GM12878 (cell line): ENCODE measurements at regions of chr15 and their contacts with region 1.

Region 1: GRCh38 chr15:89740137-89740536 is 10.9 kb downstream of the MESP1 start:
- DNase-seq: peak; percentile 43
- ATAC-seq: peak; percentile 98
- H3K4me3 ChIP-seq: no peak overlapping the region
- H3K27ac ChIP-seq: no peak overlapping the region
- H3K4me1 ChIP-seq: no peaks in the 10 kb centered on the region
- H3K27me3 ChIP-seq: no peaks in the 10 kb centered on the region
- CTCF ChIP-seq: peak; percentile 86 to 91 (median 91); a peak in 5 of 6 replicates
- EP300 ChIP-seq: no peak
- POLR2A ChIP-seq: no peak
- RAD21 ChIP-seq: peak; percentile 82

Region 2: GRCh38 chr15:89556413-89557262 is 183.5 kb before region 1 on chr15:
- CTCF ChIA-PET with region 1: no interaction called
- POLR2A ChIA-PET with region 1: no interaction called
- RAD21 ChIA-PET with region 1: no interaction called
- SMC1A ChIA-PET with region 1: no interaction called
- in situ Hi-C with region 1: no loop called
- intact Hi-C with region 1: no loop called
- DNase-seq: no peak
- ATAC-seq: peak; percentile 77
- H3K4me3 ChIP-seq: no peak overlapping the region
- H3K27ac ChIP-seq: no peak overlapping the region
- H3K4me1 ChIP-seq: peaks cover 4% of the 10 kb centered on the region; the same call in 1 of the 2 replicates
- H3K27me3 ChIP-seq: no peaks in the 10 kb centered on the region
- CTCF ChIP-seq: peak; percentile 54 to 72 (median 65)
- EP300 ChIP-seq: no peak
- POLR2A ChIP-seq: no peak
- RAD21 ChIP-seq: peak; percentile 62

Region 3: GRCh38 chr15:89728254-89728653 is 11.9 kb before region 1 on chr15:
- CTCF ChIA-PET with region 1: interaction called, 23 read pairs
- POLR2A ChIA-PET with region 1: interaction called, 3 read pairs
- RAD21 ChIA-PET with region 1: interaction called, 5 read pairs
- SMC1A ChIA-PET with region 1: interaction called, 4 read pairs
- in situ Hi-C with region 1: no loop called
- intact Hi-C with region 1: no loop called
- DNase-seq: no peak
- ATAC-seq: no peak
- H3K4me3 ChIP-seq: no peak overlapping the region
- H3K27ac ChIP-seq: no peak overlapping the region
- H3K4me1 ChIP-seq: no peaks in the 10 kb centered on the region
- H3K27me3 ChIP-seq: no peaks in the 10 kb centered on the region; a peak in 1 of 4 replicates
- CTCF ChIP-seq: no peak
- EP300 ChIP-seq: no peak
- POLR2A ChIP-seq: no peak
- RAD21 ChIP-seq: no peak

Region 4: GRCh38 chr15:89750560-89751542 is 10.7 kb after region 1 on chr15 and contains the start of gene MESP1:
- CTCF ChIA-PET with region 1: interaction called, 11 read pairs
- POLR2A ChIA-PET with region 1: interaction called, 3 read pairs
- RAD21 ChIA-PET with region 1: interaction called, 5 read pairs
- SMC1A ChIA-PET with region 1: no interaction called
- in situ Hi-C with region 1: no loop called
- intact Hi-C with region 1: no loop called
- DNase-seq: peak; percentile 51
- ATAC-seq: peak; percentile 98
- H3K4me3 ChIP-seq: peak within 1 kb of the TSS; percentile 65
- H3K27ac ChIP-seq: no peak within 1 kb of the TSS
- H3K4me1 ChIP-seq: peaks cover 9% of the 10 kb centered on the region
- H3K27me3 ChIP-seq: peaks cover 0 to 4% of the 10 kb centered on the region in 2 experiments; a peak in 2 of 4 replicates
- CTCF ChIP-seq: peak; percentile 52 to 76 (median 74)
- EP300 ChIP-seq: no peak
- POLR2A ChIP-seq: no peak; the same call in none of the 2 replicates
- RAD21 ChIP-seq: no peak; the same call in 1 of the 2 replicates
- polyA plus RNA-seq, gene MESP1: not detected

Region 5: GRCh38 chr15:89792106-89792805 is 52.1 kb after region 1 on chr15:
- CTCF ChIA-PET with region 1: no interaction called
- POLR2A ChIA-PET with region 1: no interaction called
- RAD21 ChIA-PET with region 1: no interaction called
- SMC1A ChIA-PET with region 1: no interaction called
- in situ Hi-C with region 1: no loop called
- intact Hi-C with region 1: no loop called
- DNase-seq: no peak
- ATAC-seq: no peak
- H3K4me3 ChIP-seq: no peak overlapping the region
- H3K27ac ChIP-seq: no peak overlapping the region
- H3K4me1 ChIP-seq: no peaks in the 10 kb centered on the region
- H3K27me3 ChIP-seq: no peaks in the 10 kb centered on the region
- CTCF ChIP-seq: no peak
- EP300 ChIP-seq: no peak
- POLR2A ChIP-seq: no peak
- RAD21 ChIP-seq: no peak

Region 6: GRCh38 chr15:89888214-89888804 is 148.2 kb after region 1 on chr15:
- CTCF ChIA-PET with region 1: interaction called, 24 read pairs
- POLR2A ChIA-PET with region 1: no interaction called
- RAD21 ChIA-PET with region 1: interaction called, 13 read pairs
- SMC1A ChIA-PET with region 1: interaction called, 8 read pairs
- in situ Hi-C with region 1: no loop called
- intact Hi-C with region 1: no loop called
- DNase-seq: no peak
- ATAC-seq: peak; percentile 55; the same call in 2 of the 3 replicates
- H3K4me3 ChIP-seq: no peak overlapping the region
- H3K27ac ChIP-seq: no peak overlapping the region
- H3K4me1 ChIP-seq: peaks cover 14% of the 10 kb centered on the region
- H3K27me3 ChIP-seq: no peaks in the 10 kb centered on the region
- CTCF ChIP-seq: peak; percentile 32 to 38 (median 35); a peak in 3 of 6 replicates
- EP300 ChIP-seq: no peak
- POLR2A ChIP-seq: no peak
- RAD21 ChIP-seq: peak; percentile 46